Psoas muscle (tissue), 8 donors: ENCODE measurements at regions of chr6 and their contacts with region 1.

Region 1: DNA sequence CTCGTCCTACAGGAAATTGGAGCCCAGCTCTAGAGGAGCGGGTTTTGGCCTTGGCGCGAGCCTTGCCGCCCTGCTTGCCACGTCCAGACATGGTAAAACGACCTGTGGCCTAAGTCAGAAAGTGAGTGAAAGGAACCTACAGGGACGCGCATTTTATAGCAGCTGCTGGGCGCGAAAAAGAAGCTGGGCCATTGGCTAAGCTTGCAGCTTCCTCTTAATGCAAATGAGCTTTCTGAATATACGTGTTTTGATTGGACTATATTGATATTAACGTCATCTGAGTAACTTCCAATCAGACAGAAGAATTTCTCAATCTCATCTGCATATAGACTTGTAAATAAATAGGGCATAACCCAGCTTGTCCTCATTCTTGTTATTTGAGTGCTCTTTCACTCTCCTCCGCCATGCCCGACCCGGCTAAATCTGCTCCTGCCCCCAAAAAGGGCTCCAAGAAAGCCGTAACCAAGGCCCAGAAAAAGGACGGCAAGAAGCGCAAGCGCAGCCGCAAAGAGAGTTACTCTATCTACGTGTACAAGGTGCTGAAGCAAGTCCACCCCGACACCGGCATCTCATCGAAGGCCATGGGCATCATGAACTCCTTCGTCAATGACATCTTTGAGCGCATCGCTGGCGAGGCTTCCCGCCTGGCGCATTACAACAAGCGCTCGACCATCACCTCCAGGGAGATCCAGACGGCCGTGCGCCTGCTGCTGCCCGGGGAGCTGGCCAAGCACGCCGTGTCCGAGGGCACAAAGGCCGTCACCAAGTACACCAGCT is 18.9 kb downstream of the OR2B2 start:
- DNase-seq: peak; percentile 66 to 80
- ATAC-seq: peak; percentile 65 to 78 (median 72)
- H3K4me3 ChIP-seq: peak overlapping the region; percentile 77
- H3K27ac ChIP-seq: peak overlapping the region; percentile 37
- H3K4me1 ChIP-seq: peaks cover 4% of the 10 kb centered on the region
- H3K27me3 ChIP-seq: peaks cover 0 to 31% (median 0%) of the 10 kb centered on the region in 3 donors
- CTCF ChIP-seq: no peak

Region 2: DNA sequence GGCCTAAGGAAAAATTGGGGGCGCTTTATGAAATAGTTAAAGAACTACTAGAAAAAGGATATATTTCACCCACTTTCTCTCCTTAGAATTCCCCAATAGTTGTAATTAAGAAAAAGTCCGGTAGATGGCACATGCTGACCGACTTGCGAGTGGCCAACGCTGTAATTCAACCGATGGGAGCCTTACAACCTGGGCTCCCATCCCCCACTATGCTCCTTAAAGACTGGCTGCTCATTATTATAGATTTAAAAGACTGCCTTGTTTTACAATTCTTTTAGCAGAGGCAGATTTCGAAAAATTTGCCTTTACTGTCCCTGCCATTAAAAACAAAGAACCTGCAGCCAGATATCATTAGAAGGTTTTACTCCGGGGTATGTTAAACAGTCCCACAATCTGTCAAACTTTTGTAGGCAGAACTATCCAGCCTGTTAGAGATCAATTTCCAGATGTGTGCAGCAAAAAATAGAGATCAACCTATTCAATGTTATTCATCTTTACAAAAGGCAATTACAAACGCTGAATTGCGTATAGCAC is 704.3 kb before region 1 on chr6:
- intact Hi-C with region 1: loop called (anchors 2 to 5 kb)
- DNase-seq: peak; percentile 40 to 59
- ATAC-seq: peak; percentile 90 to 96 (median 94)
- H3K4me3 ChIP-seq: peak overlapping the region; percentile 86
- H3K27ac ChIP-seq: peak overlapping the region; percentile 71
- H3K4me1 ChIP-seq: peaks cover 4% of the 10 kb centered on the region
- H3K27me3 ChIP-seq: peaks cover 0 to 1% (median 0%) of the 10 kb centered on the region in 3 donors
- CTCF ChIP-seq: peak; percentile 76

Region 3: GRCh38 chr6:27518881-27519795 is 374.1 kb before region 1 on chr6:
- intact Hi-C with region 1: loop called in 1 of 2 experiments (anchors 5 kb)
- DNase-seq: peak; percentile 45 to 70
- ATAC-seq: peak; percentile 84 to 94 (median 89)
- H3K4me3 ChIP-seq: peak overlapping the region; percentile 80
- H3K27ac ChIP-seq: peak overlapping the region; percentile 75
- H3K4me1 ChIP-seq: peaks cover 10% of the 10 kb centered on the region
- H3K27me3 ChIP-seq: peaks cover 0 to 2% (median 0%) of the 10 kb centered on the region in 3 donors
- CTCF ChIP-seq: peak; percentile 69

Region 4: GRCh38 chr6:27772261-27773001 is 120.8 kb before region 1 on chr6:
- intact Hi-C with region 1: loop called (anchors 2 to 5 kb)
- DNase-seq: peak; percentile 85 to 91
- ATAC-seq: peak; percentile 88 to 100 (median 92)
- H3K4me3 ChIP-seq: peak overlapping the region; percentile 22
- H3K27ac ChIP-seq: no peak overlapping the region
- H3K4me1 ChIP-seq: no peaks in the 10 kb centered on the region
- H3K27me3 ChIP-seq: peaks cover 0 to 22% (median 0%) of the 10 kb centered on the region in 3 donors
- CTCF ChIP-seq: peak; percentile 89

Region 5: GRCh38 chr6:27864906-27865849 is 28.1 kb before region 1 on chr6:
- intact Hi-C with region 1: no loop called
- DNase-seq: peak; percentile 33 to 70
- ATAC-seq: peak; percentile 81 to 87 (median 84)
- H3K4me3 ChIP-seq: peak overlapping the region; percentile 71
- H3K27ac ChIP-seq: peak overlapping the region; percentile 42
- H3K4me1 ChIP-seq: peaks cover 28% of the 10 kb centered on the region
- H3K27me3 ChIP-seq: peaks cover 0 to 87% (median 12%) of the 10 kb centered on the region in 3 donors
- CTCF ChIP-seq: no peak

Region 6: DNA sequence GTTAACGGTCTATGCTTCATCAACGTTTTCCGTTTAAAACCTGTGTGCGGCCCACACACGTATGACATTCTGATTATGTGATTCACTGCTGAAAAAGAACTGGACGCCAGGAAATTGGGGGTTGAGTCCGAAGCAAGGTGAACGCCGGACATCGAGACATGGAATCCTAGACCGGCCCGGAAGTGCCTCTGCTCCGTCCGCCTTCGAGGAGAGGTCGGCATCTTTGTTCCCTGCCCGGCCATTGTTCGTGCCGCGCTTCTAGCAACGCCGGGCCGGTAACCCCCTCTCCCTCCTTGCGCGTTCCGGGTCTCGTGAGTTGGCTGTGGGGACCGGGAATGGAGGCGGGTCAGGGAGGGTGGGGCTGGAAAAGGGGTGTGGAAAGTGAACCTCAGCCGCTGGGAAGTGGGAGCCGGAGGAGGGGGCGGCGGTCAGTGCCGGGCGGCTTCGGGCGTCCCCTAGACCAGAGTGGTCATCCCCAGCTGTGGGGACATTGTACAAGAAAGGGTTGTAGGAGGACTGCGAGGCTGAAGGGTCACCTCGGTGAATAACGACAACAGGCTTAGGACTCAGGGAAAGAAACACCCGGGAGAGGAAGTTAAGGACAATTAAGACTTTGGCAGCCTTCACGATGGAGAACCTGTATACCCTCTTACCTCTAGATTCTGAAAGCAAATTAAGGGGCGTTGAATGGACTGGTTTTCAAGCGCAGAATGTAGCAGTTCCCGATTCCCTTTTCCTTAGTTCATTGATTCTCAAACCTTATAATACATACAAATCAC is 332.0 kb after region 1 on chr6 and contains the start of gene ZSCAN9:
- intact Hi-C with region 1: no loop called
- DNase-seq: peak; percentile 88 to 93
- ATAC-seq: peak; percentile 95 to 99 (median 98)
- H3K4me3 ChIP-seq: peak within 1 kb of the TSS; percentile 84
- H3K27ac ChIP-seq: peak within 1 kb of the TSS; percentile 62
- H3K4me1 ChIP-seq: peaks cover 10% of the 10 kb centered on the region
- H3K27me3 ChIP-seq: peaks cover 0 to 9% (median 1%) of the 10 kb centered on the region in 3 donors
- CTCF ChIP-seq: no peak
- total RNA-seq, gene ZSCAN9: 5.2 to 6.9 (median 6.3) TPM

Region 7: DNA sequence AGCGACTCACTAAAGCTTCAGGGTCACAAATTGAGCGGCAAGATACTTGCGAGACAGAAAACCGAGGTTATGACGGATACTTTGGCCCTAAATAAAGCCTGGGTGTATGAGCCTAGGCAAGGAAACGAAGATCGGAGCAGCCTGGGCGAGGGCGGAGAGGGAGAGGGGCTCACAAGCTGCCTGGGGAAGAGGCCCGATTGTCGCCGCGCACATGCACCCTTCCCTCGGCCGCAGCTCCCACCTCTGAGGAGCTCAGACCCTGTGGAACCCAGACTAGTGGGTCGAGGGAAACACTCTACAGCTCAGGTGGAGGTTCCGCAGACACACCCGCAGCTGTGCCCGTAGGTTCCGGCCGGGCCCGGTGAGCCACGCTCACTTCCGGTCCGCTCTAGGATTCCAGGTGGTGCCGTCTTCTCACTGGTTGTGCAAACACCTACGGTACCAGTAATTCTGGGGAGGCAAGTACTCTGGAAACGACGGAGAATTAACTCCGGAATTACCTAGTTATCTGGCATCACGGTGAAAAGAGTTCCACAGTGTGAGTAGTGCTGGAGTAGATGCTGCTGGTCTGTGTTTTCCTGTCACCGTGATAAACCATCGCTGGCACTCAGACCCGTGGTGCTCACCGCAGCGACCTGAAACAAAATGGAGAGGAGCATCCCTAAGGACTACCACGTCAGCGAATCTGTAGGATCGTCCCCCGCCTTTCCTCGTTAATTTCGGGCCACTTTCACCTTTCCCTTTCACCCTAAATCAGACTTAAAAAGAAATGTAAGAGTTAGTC is 693.9 kb after region 1 on chr6:
- intact Hi-C with region 1: no loop called
- DNase-seq: no peak
- ATAC-seq: no peak
- H3K4me3 ChIP-seq: peak overlapping the region; percentile 62
- H3K27ac ChIP-seq: no peak overlapping the region
- H3K4me1 ChIP-seq: no peaks in the 10 kb centered on the region
- H3K27me3 ChIP-seq: peaks cover 8 to 52% (median 22%) of the 10 kb centered on the region in 3 donors
- CTCF ChIP-seq: no peak